B cell (primary cell): ENCODE measurements at regions of chr18 and their contacts with region 1.

Region 1: GRCh38 chr18:54671291-54671881 is 80.3 kb downstream of the DYNAP start:
- DNase-seq: peak; percentile 42
- ATAC-seq: no peak
- H3K4me3 ChIP-seq: no peak overlapping the region
- H3K4me3 Mint-ChIP-seq: no peak overlapping the region
- H3K27ac ChIP-seq: no peak overlapping the region
- H3K27ac Mint-ChIP-seq: no peak overlapping the region
- H3K4me1 ChIP-seq: no peaks in the 10 kb centered on the region
- H3K4me1 Mint-ChIP-seq: no peaks in the 10 kb centered on the region
- H3K27me3 ChIP-seq: no peaks in the 10 kb centered on the region
- H3K27me3 Mint-ChIP-seq: peaks cover 8% of the 10 kb centered on the region
- CTCF ChIP-seq: peak; percentile 85

Region 2: DNA sequence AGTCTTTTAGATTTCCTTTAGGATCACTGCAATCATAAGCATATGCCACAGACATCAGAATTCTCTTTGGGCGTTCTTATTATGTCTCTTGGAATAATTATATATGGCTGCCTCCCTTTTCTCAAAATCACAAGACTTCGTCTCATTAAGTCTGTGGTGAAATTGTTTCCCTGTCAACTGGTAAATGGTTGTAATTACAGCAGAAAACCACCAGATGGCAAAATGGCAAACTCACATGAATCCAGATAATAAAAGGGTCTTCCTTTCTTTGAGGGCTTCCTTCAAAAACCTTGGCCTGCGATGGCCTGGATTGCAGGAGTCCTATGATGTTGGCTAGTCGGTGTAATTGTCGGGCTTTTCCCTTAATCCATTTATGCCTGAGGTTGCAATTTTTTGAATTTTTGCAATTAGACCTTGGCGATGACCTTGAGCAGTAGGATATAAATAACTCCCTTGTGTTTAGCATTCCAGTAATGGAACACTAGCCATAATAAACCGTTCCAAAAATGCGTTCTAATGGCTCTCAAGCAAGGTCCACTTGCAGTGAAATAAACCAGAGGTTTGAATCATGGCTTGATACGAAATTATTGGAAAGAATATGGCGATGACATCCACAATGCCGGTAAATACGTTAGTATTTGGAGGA is 1103.3 kb before region 1 on chr18:
- CTCF ChIA-PET with region 1: interaction called, 13 read pairs
- POLR2A ChIA-PET with region 1: no interaction called
- intact Hi-C with region 1: no loop called
- DNase-seq: peak; percentile 23
- ATAC-seq: no peak
- H3K4me3 ChIP-seq: no peak overlapping the region
- H3K4me3 Mint-ChIP-seq: no peak overlapping the region
- H3K27ac ChIP-seq: no peak overlapping the region
- H3K27ac Mint-ChIP-seq: no peak overlapping the region
- H3K4me1 ChIP-seq: no peaks in the 10 kb centered on the region
- H3K4me1 Mint-ChIP-seq: no peaks in the 10 kb centered on the region
- H3K27me3 ChIP-seq: no peaks in the 10 kb centered on the region
- H3K27me3 Mint-ChIP-seq: peaks cover 2% of the 10 kb centered on the region
- CTCF ChIP-seq: peak; percentile 79

Region 3: GRCh38 chr18:53687002-53687401 is 984.4 kb before region 1 on chr18:
- CTCF ChIA-PET with region 1: no interaction called
- POLR2A ChIA-PET with region 1: no interaction called
- intact Hi-C with region 1: no loop called
- DNase-seq: no peak
- ATAC-seq: no peak
- H3K4me3 ChIP-seq: no peak overlapping the region
- H3K4me3 Mint-ChIP-seq: no peak overlapping the region
- H3K27ac ChIP-seq: no peak overlapping the region
- H3K27ac Mint-ChIP-seq: no peak overlapping the region
- H3K4me1 ChIP-seq: no peaks in the 10 kb centered on the region
- H3K4me1 Mint-ChIP-seq: no peaks in the 10 kb centered on the region
- H3K27me3 ChIP-seq: no peaks in the 10 kb centered on the region
- H3K27me3 Mint-ChIP-seq: no peaks in the 10 kb centered on the region
- CTCF ChIP-seq: no peak

Region 4: DNA sequence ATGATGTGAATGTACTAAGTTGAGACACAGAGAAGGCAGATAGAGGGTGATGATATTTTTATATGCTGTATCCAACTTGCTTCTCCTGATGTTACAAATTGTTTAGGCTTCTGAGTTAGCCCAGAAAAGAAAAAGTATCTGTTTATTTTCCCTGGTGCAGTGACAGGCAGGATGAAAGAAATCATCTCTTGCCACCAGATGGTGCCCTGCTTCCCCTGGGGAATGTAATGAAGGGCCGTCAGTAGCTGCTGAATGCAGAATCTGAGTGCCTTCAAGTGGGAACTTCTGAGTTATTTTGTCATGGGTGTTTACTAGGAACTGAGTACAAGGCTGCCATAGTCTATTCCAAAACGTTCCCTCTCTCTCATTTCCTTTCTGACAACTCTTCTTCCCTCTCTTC is 972.5 kb before region 1 on chr18:
- CTCF ChIA-PET with region 1: no interaction called
- POLR2A ChIA-PET with region 1: no interaction called
- intact Hi-C with region 1: loop called (anchors 5 kb)
- DNase-seq: no peak
- ATAC-seq: no peak
- H3K4me3 ChIP-seq: no peak overlapping the region
- H3K4me3 Mint-ChIP-seq: no peak overlapping the region
- H3K27ac ChIP-seq: no peak overlapping the region
- H3K27ac Mint-ChIP-seq: no peak overlapping the region
- H3K4me1 ChIP-seq: no peaks in the 10 kb centered on the region
- H3K4me1 Mint-ChIP-seq: no peaks in the 10 kb centered on the region
- H3K27me3 ChIP-seq: no peaks in the 10 kb centered on the region
- H3K27me3 Mint-ChIP-seq: no peaks in the 10 kb centered on the region
- CTCF ChIP-seq: no peak

Region 5: DNA sequence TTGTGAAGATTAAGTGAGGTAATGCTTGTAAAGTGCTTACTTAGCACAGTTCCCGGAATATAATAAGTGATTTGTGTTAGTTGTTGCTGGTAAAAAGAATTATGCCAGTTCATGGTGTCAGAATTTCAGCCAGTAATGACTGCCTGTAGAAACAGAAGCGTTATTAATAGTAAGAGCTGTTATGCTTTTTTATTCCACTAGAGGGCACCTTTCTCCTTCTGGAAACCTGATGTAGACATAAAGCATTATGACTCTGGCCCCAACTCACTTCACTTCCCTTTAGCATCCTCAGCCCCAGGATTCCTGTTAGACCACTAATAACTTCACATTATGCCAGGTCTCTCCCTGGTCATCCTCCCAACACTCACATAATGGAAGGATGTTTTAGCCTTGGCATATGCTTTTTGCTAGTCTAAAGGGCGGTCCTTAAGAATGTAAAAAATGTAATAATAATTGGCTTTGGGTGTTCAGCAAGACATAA is 278.8 kb before region 1 on chr18:
- CTCF ChIA-PET with region 1: interaction called, 11 read pairs
- POLR2A ChIA-PET with region 1: no interaction called
- intact Hi-C with region 1: no loop called
- DNase-seq: peak; percentile 74
- ATAC-seq: peak; percentile 64
- H3K4me3 ChIP-seq: no peak overlapping the region
- H3K4me3 Mint-ChIP-seq: no peak overlapping the region
- H3K27ac ChIP-seq: no peak overlapping the region
- H3K27ac Mint-ChIP-seq: no peak overlapping the region
- H3K4me1 ChIP-seq: no peaks in the 10 kb centered on the region
- H3K4me1 Mint-ChIP-seq: no peaks in the 10 kb centered on the region
- H3K27me3 ChIP-seq: no peaks in the 10 kb centered on the region
- H3K27me3 Mint-ChIP-seq: peaks cover 9% of the 10 kb centered on the region
- CTCF ChIP-seq: peak; percentile 80

Region 6: GRCh38 chr18:54852780-54853675 is 181.6 kb after region 1 on chr18:
- CTCF ChIA-PET with region 1: no interaction called
- POLR2A ChIA-PET with region 1: no interaction called
- intact Hi-C with region 1: no loop called
- DNase-seq: no peak
- ATAC-seq: no peak
- H3K4me3 ChIP-seq: no peak overlapping the region
- H3K4me3 Mint-ChIP-seq: no peak overlapping the region
- H3K27ac ChIP-seq: no peak overlapping the region
- H3K27ac Mint-ChIP-seq: no peak overlapping the region
- H3K4me1 ChIP-seq: no peaks in the 10 kb centered on the region
- H3K4me1 Mint-ChIP-seq: no peaks in the 10 kb centered on the region
- H3K27me3 ChIP-seq: no peaks in the 10 kb centered on the region
- H3K27me3 Mint-ChIP-seq: peaks cover 4% of the 10 kb centered on the region
- CTCF ChIP-seq: no peak